ENCODE measurements at regions of chr19 and their contacts with region 1.

Region 1: GRCh38 chr19:37691881-37692504 is 27.6 kb downstream of the ZNF607 start:
- DNase-seq: peak; percentile 85 to 89
- ATAC-seq: peak; percentile 94 to 98 (median 98)
- H3K4me3 ChIP-seq: peak overlapping the region; percentile 34 to 83 (median 64)
- H3K27ac ChIP-seq: peak overlapping the region in 9 of 10 donors; percentile 69 to 90 (median 82)
- H3K4me1 ChIP-seq: peaks cover 0 to 18% (median 8%) of the 10 kb centered on the region in 9 donors
- H3K27me3 ChIP-seq: no peaks in the 10 kb centered on the region
- CTCF ChIP-seq: peak in 3 of 9 donors; percentile 27 to 39 (median 35)

Region 2: GRCh38 chr19:37506387-37507166 is 185.4 kb before region 1 on chr19 and contains the start of gene ZNF793:
- intact Hi-C with region 1: loop called in 1 of 10 experiments (anchors 5 kb)
- DNase-seq: peak; percentile 84 to 88
- ATAC-seq: peak; percentile 91 to 96 (median 94)
- H3K4me3 ChIP-seq: peak within 1 kb of the TSS; percentile 61 to 97 (median 73)
- H3K27ac ChIP-seq: peak within 1 kb of the TSS; percentile 90 to 98 (median 94)
- H3K4me1 ChIP-seq: peaks cover 0 to 22% (median 14%) of the 10 kb centered on the region in 9 donors
- H3K27me3 ChIP-seq: no peaks in the 10 kb centered on the region
- CTCF ChIP-seq: no peak
- total RNA-seq, gene ZNF793: 4.7 to 9.6 (median 6.9) TPM

Region 3: GRCh38 chr19:37583340-37583739 is 108.7 kb before region 1 on chr19:
- intact Hi-C with region 1: no loop called
- DNase-seq: no peak
- ATAC-seq: no peak
- H3K4me3 ChIP-seq: no peak overlapping the region
- H3K27ac ChIP-seq: no peak overlapping the region
- H3K4me1 ChIP-seq: no peaks in the 10 kb centered on the region
- H3K27me3 ChIP-seq: no peaks in the 10 kb centered on the region
- CTCF ChIP-seq: no peak

Region 4: DNA sequence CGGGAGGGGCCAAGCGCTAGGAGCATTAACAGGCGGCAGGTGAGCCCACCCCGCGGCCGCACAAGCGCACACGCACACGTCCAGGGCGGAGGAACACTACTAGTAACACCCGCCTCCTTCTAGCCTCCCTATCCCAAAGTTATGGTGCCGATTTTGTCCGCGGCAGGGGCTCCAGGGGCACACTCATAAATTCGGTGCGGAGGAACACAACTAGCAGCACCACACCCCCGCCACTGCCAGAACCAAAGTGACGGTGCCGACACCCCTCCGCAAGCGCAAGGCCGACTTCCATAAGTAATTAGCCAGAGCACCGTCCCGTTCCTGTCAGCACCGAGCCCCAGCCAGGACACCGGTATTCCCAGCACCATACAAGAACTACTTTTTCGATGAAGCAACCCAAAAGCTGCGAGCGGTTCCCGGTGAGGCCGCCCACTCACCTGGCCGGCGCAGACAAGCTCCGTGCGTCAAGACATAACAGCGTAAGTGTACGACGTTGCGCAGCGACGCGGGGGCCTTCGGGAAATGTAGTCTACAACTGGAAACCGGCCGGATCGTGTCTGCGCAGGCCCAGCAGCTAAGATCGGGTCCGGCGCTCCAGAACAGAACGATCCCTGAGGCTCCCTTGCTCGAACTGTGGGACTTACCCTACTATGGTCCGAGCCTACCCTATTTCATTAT is 97.5 kb before region 1 on chr19 and contains the starts of genes ZNF540 and ZNF571:
- intact Hi-C with region 1: loop called in 2 of 10 experiments (anchors 10 kb)
- DNase-seq: peak; percentile 92 to 95
- ATAC-seq: peak; percentile 99 to 100 (median 100)
- H3K4me3 ChIP-seq: peak within 1 kb of the TSS; percentile 51 to 98 (median 80)
- H3K27ac ChIP-seq: peak within 1 kb of the TSS; percentile 63 to 93 (median 90)
- H3K4me1 ChIP-seq: peaks cover 0 to 22% (median 15%) of the 10 kb centered on the region in 9 donors
- H3K27me3 ChIP-seq: no peaks in the 10 kb centered on the region
- CTCF ChIP-seq: no peak
- total RNA-seq, gene ZNF540: 3.1 to 7.2 (median 5.0) TPM
- total RNA-seq, gene ZNF571: 2.1 to 5.1 (median 3.5) TPM

Region 5: GRCh38 chr19:37655689-37656371 is 36.2 kb before region 1 on chr19:
- intact Hi-C with region 1: loop called in 4 of 10 experiments (anchors 1 to 5 kb)
- DNase-seq: peak; percentile 86 to 88
- ATAC-seq: peak; percentile 77 to 93 (median 88)
- H3K4me3 ChIP-seq: peak overlapping the region; percentile 63 to 90 (median 80)
- H3K27ac ChIP-seq: peak overlapping the region; percentile 39 to 93 (median 90)
- H3K4me1 ChIP-seq: peaks cover 0 to 31% (median 24%) of the 10 kb centered on the region in 9 donors
- H3K27me3 ChIP-seq: no peaks in the 10 kb centered on the region
- CTCF ChIP-seq: peak in 1 of 9 donors; percentile 9

Region 6: DNA sequence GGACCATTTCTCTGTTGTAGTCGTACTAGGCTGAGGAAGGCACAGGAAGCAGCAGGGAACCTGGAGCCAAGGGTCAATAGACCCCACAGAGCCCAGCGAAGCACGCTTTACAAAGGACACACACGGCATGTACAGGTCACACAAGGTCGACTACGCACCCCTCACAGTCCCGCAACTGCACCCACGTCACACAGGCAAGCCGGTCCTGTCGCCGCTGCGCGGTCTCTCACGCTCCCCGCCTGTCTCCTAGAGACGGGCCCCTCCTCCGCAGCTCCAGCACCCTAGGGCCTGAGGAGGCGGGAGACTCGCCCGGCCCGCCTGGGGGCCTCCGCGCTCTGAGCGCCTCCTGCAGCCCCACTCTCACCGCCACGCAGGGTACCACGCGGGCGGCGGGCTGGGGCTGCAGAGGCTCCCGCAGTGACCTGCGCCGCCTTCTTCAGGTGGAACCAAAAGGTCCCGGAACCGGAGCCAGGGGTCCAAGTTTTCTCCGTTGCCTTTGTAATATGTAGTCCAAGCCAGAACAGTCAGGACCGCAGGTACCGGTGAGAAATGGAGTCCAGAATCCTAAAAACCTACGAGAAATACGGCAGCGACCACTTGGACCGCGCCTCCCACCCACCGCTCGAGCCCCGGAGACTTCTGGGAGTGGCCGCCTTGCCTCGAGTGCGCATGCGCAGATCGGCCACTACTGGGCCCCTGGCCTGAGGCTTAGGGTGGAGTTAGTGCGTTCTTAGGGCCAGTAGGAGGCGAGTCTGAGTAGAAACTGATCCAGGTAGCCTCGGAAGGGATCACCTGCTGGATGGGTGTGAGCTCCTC is 27.3 kb after region 1 on chr19 and contains the start of gene ZNF607:
- intact Hi-C with region 1: loop called in 1 of 10 experiments (anchors 2 kb)
- DNase-seq: peak; percentile 91 to 93
- ATAC-seq: peak; percentile 99 to 100 (median 100)
- H3K4me3 ChIP-seq: peak within 1 kb of the TSS; percentile 47 to 95 (median 84)
- H3K27ac ChIP-seq: peak within 1 kb of the TSS in 9 of 10 donors; percentile 74 to 90 (median 84)
- H3K4me1 ChIP-seq: peaks cover 0 to 16% (median 12%) of the 10 kb centered on the region in 9 donors
- H3K27me3 ChIP-seq: no peaks in the 10 kb centered on the region
- CTCF ChIP-seq: peak; percentile 17 to 80 (median 63)
- total RNA-seq, gene ZNF607: 3.0 to 8.4 (median 6.1) TPM

Region 7: GRCh38 chr19:37779127-37780005 is 87.4 kb after region 1 on chr19 and contains the start of gene ZNF573:
- intact Hi-C with region 1: no loop called
- DNase-seq: peak; percentile 80 to 91
- ATAC-seq: peak; percentile 96 to 99 (median 98)
- H3K4me3 ChIP-seq: peak within 1 kb of the TSS; percentile 52 to 99 (median 78)
- H3K27ac ChIP-seq: peak within 1 kb of the TSS; percentile 79 to 92 (median 90)
- H3K4me1 ChIP-seq: peaks cover 2 to 19% (median 14%) of the 10 kb centered on the region in 9 donors
- H3K27me3 ChIP-seq: no peaks in the 10 kb centered on the region
- CTCF ChIP-seq: peak in 5 of 9 donors; percentile 8 to 37 (median 29)
- total RNA-seq, gene ZNF573: 6.9 to 14.1 (median 10.4) TPM